IMR-90 (cell line): ENCODE measurements at regions of chr1 and their contacts with region 1.

Region 1: DNA sequence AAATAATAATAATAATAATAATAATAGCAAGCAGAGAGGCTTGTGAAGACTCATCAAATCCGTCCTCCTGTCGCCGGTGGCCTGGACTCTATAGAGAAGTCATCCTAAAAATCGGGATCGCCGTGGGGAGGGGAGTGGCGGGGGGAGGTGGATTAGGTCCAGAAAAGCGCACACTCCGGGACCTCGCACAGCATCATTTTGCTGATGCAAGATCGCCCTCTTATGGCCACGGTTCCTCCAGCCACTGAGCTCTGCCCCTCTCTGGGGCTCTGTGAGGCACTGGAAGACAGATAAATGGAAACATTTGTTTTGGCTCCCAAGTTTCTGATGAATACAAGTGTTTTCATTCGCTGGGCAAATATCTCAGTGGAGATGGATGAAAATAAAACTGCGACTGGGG is 612.0 kb downstream of the MATN1 start:
- DNase-seq: peak; percentile 41
- ATAC-seq: peak; percentile 92
- H3K4me3 ChIP-seq: no peak overlapping the region
- H3K27ac ChIP-seq: no peak overlapping the region
- H3K4me1 ChIP-seq: no peaks in the 10 kb centered on the region
- H3K27me3 ChIP-seq: peaks cover 10% of the 10 kb centered on the region
- CTCF ChIP-seq: peak; percentile 72
- POLR2A ChIP-seq: no peak
- RAD21 ChIP-seq: peak; percentile 76

Region 2: GRCh38 chr1:29513357-29513756 is 598.1 kb before region 1 on chr1:
- CTCF ChIA-PET with region 1: interaction called, 7 read pairs
- POLR2A ChIA-PET with region 1: no interaction called
- dilution Hi-C with region 1: no loop called
- in situ Hi-C with region 1: loop called (anchors 25 kb)
- intact Hi-C with region 1: loop called (anchors 2 kb)
- DNase-seq: peak; percentile 70
- ATAC-seq: peak; percentile 93
- H3K4me3 ChIP-seq: no peak overlapping the region
- H3K27ac ChIP-seq: no peak overlapping the region
- H3K4me1 ChIP-seq: no peaks in the 10 kb centered on the region
- H3K27me3 ChIP-seq: peaks cover 9% of the 10 kb centered on the region
- CTCF ChIP-seq: peak; percentile 85
- POLR2A ChIP-seq: 0 out of 2 replicates have a peak, but pooled peaks have one; percentile 29
- RAD21 ChIP-seq: peak; percentile 97

Region 3: GRCh38 chr1:29793101-29793546 is 318.3 kb before region 1 on chr1:
- CTCF ChIA-PET with region 1: interaction called, 3 read pairs
- POLR2A ChIA-PET with region 1: no interaction called
- dilution Hi-C with region 1: no loop called
- in situ Hi-C with region 1: no loop called
- intact Hi-C with region 1: loop called (anchors 2 kb)
- DNase-seq: peak; percentile 72
- ATAC-seq: peak; percentile 98
- H3K4me3 ChIP-seq: no peak overlapping the region
- H3K27ac ChIP-seq: no peak overlapping the region
- H3K4me1 ChIP-seq: no peaks in the 10 kb centered on the region
- H3K27me3 ChIP-seq: no peaks in the 10 kb centered on the region; the same call in 1 of the 2 replicates
- CTCF ChIP-seq: peak; percentile 83
- POLR2A ChIP-seq: no peak
- RAD21 ChIP-seq: peak; percentile 79

Region 4: GRCh38 chr1:30133414-30134055 is 22.1 kb after region 1 on chr1:
- CTCF ChIA-PET with region 1: no interaction called
- POLR2A ChIA-PET with region 1: no interaction called
- dilution Hi-C with region 1: no loop called
- in situ Hi-C with region 1: no loop called
- intact Hi-C with region 1: no loop called
- DNase-seq: no peak
- ATAC-seq: no peak
- H3K4me3 ChIP-seq: no peak overlapping the region
- H3K27ac ChIP-seq: no peak overlapping the region
- H3K4me1 ChIP-seq: no peaks in the 10 kb centered on the region
- H3K27me3 ChIP-seq: no peaks in the 10 kb centered on the region; the same call in 1 of the 2 replicates
- CTCF ChIP-seq: no peak
- POLR2A ChIP-seq: no peak
- RAD21 ChIP-seq: no peak